Activated B cell treated with CpG ODN at 0.5 μM for 24 hours (primary cell): ENCODE measurements at regions of chr17 and their contacts with region 1.

Region 1: GRCh38 chr17:58219001-58219788 is at the start of gene MKS1:
- DNase-seq: peak; percentile 91
- ATAC-seq: peak; percentile 96
- H3K4me3 Mint-ChIP-seq: peak within 1 kb of the TSS; percentile 91
- H3K27ac Mint-ChIP-seq: peak within 1 kb of the TSS; percentile 96
- H3K4me1 Mint-ChIP-seq: peaks cover 43% of the 10 kb centered on the region
- H3K27me3 Mint-ChIP-seq: peaks cover 2% of the 10 kb centered on the region
- CTCF ChIP-seq: no peak
- total RNA-seq, gene MKS1: 16.0 and 17.3 TPM in 2 replicates

Region 2: DNA sequence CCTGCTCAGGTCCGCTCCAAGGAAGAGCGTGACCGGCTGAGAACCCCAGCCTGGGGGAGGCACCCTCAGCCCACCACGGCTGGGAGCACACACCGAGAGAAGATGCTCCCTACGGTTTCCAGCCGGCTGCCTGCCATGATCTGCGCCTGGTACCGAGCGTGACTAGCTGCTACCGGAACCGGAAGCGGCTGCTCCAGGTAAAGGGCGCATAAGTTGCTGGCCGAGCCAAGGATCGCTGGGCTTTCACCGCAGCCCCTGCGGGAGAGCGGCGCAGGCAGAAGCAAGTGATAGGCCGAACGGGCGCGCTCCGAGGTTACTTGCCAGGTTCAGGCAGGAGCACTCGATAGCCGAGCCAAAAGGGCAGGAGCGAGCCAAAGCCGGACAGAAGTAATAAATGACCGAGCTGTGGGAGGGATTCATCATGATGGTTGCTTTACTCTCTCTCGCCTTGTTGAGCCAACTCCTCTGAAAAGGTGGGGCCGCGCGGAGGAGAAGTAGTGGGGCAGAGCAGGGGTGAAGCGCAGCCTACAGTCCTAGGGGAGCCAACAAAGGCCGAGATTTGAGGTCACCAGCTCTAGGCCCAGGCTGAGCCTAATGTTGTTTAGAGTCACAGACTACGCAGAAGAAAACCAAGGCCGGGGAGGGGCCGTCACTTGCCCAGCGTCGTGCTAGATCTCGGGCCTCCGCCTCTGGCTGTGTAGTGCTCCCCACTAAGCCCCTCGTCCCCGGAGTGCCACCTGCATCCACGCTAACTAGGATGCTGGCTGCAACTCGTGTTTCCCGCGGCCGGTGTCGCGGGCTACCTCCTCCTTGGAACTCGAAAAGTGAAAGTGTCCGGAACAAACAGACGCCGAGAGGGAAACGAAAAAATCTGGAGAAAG is 369.1 kb before region 1 on chr17 and contains the start of gene MRPS23:
- CTCF ChIA-PET with region 1: no interaction called
- POLR2A ChIA-PET with region 1: interaction called, 6 read pairs
- intact Hi-C with region 1: loop called (anchors 1 kb)
- DNase-seq: peak; percentile 87
- ATAC-seq: peak; percentile 95
- H3K4me3 Mint-ChIP-seq: peak within 1 kb of the TSS; percentile 93
- H3K27ac Mint-ChIP-seq: peak within 1 kb of the TSS; percentile 96
- H3K4me1 Mint-ChIP-seq: peaks cover 38% of the 10 kb centered on the region
- H3K27me3 Mint-ChIP-seq: no peaks in the 10 kb centered on the region
- CTCF ChIP-seq: no peak
- total RNA-seq, gene MRPS23: 37.9 and 47.4 TPM in 2 replicates

Region 3: DNA sequence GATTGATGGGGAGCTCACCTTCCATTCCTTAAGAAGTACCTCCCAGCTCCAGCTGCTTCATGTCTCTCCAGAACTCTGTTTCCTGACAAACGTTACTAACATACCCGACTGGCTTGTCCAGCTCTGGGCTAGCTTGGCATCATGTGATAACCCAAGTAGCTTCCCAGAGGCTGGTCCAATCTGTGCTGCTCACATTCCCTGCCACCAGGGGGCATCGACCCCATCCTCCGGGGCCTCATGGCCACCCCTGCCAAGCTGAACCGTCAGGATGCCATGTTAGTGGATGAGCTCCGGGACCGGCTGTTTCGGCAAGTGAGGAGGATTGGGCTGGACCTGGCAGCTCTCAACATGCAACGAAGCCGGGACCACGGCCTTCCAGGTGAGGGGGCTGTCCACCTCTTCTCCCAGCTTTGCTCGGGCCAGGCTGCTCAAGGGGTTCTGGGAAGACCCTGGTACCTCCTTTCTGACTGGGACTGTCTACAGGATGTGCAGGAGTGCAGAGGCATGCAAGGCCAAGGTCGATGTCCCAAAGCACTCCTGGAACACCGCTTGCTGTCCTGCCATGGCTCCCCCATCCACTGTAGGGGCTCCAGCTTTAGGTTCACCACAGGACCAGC is 19.1 kb before region 1 on chr17:
- CTCF ChIA-PET with region 1: interaction called, 16 read pairs
- POLR2A ChIA-PET with region 1: interaction called, 6 read pairs
- intact Hi-C with region 1: no loop called
- DNase-seq: peak; percentile 35
- ATAC-seq: peak; percentile 82
- H3K4me3 Mint-ChIP-seq: no peak overlapping the region
- H3K27ac Mint-ChIP-seq: no peak overlapping the region
- H3K4me1 Mint-ChIP-seq: peaks cover 2% of the 10 kb centered on the region
- H3K27me3 Mint-ChIP-seq: peaks cover 27% of the 10 kb centered on the region
- CTCF ChIP-seq: no peak

Region 4: DNA sequence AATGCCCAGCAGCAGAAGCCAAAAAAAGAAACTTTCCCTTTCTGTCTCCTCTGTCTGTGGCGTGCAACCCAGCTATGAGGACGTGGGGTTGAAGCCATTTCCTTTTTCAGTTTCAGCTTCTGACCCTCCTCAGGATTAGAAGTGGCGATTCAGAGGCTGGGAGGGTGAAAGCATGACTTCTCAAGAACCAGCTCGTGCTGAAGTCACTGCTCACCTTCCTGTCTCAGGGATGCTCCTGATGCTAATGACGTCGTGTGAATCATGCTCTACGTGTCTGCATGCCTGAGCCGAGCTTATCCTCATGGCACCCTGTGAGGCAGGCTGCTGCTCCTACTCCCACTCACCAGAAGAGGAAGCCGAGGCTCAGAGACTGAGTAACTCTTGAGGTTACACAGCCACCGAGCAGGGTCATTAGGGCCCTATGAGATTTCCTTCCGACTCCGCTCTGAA is 13.5 kb after region 1 on chr17:
- CTCF ChIA-PET with region 1: interaction called, 4 read pairs
- POLR2A ChIA-PET with region 1: interaction called, 19 read pairs
- intact Hi-C with region 1: loop called (anchors 1 kb)
- DNase-seq: peak; percentile 29
- ATAC-seq: peak; percentile 76
- H3K4me3 Mint-ChIP-seq: peak overlapping the region; percentile 51
- H3K27ac Mint-ChIP-seq: peak overlapping the region; percentile 90
- H3K4me1 Mint-ChIP-seq: peaks cover 30% of the 10 kb centered on the region
- H3K27me3 Mint-ChIP-seq: peaks cover 2% of the 10 kb centered on the region
- CTCF ChIP-seq: no peak

Region 5: GRCh38 chr17:58249270-58250133 is 30.3 kb after region 1 on chr17:
- CTCF ChIA-PET with region 1: interaction called, 8 read pairs
- POLR2A ChIA-PET with region 1: interaction called, 7 read pairs
- intact Hi-C with region 1: loop called (anchors 1 kb)
- DNase-seq: peak; percentile 80
- ATAC-seq: peak; percentile 96
- H3K4me3 Mint-ChIP-seq: peak overlapping the region; percentile 84
- H3K27ac Mint-ChIP-seq: no peak overlapping the region
- H3K4me1 Mint-ChIP-seq: peaks cover 14% of the 10 kb centered on the region
- H3K27me3 Mint-ChIP-seq: peaks cover 4% of the 10 kb centered on the region
- CTCF ChIP-seq: peak; percentile 71

Region 6: DNA sequence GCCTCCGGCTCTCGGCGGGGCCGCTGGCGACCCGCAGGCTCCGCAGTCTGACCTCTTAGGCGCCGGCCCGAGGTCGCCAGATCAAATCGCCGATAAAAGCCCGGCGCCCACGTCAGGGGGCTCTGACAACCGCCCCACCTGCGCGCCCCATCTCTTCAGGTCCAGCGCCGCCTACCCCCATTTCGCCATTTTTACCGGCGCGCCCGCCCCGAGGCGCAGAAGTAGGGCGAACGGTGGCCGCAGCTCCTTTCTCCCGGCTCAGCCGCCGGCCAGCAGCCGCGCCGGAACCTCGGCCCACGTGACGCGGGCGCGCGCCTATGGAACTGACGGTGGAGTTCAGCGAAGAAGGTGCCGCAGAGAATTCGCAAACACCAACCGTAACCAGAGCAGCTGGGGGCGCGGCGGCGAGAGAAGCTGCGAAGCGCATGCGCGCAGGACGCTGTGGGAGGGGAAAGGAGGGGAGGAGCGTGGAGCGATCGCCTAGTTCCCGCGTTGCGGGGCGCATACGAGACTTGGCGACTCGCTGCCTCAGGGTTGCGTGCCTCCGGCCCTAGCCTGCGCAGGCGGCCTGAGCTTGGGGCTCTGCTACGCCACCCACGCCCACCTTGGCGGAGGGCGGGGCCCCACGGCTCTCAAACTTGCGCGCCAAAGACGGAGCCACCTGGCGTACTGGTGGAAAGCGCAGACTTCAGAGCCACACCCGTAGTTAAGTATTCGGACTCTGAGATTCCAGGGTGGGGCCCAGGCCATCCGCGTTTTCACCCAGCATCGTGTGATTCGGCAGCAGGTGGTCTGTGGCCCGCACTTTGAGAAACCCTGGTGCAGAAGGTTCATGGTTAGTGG is 887.5 kb after region 1 on chr17 and contains the start of gene TRIM37:
- CTCF ChIA-PET with region 1: no interaction called
- POLR2A ChIA-PET with region 1: no interaction called
- intact Hi-C with region 1: loop called (anchors 1 kb)
- DNase-seq: peak; percentile 98
- ATAC-seq: peak; percentile 96
- H3K4me3 Mint-ChIP-seq: peak within 1 kb of the TSS; percentile 94
- H3K27ac Mint-ChIP-seq: peak within 1 kb of the TSS; percentile 82
- H3K4me1 Mint-ChIP-seq: peaks cover 28% of the 10 kb centered on the region
- H3K27me3 Mint-ChIP-seq: no peaks in the 10 kb centered on the region
- CTCF ChIP-seq: no peak
- total RNA-seq, gene TRIM37: 16.4 and 17.3 TPM in 2 replicates

Region 7: DNA sequence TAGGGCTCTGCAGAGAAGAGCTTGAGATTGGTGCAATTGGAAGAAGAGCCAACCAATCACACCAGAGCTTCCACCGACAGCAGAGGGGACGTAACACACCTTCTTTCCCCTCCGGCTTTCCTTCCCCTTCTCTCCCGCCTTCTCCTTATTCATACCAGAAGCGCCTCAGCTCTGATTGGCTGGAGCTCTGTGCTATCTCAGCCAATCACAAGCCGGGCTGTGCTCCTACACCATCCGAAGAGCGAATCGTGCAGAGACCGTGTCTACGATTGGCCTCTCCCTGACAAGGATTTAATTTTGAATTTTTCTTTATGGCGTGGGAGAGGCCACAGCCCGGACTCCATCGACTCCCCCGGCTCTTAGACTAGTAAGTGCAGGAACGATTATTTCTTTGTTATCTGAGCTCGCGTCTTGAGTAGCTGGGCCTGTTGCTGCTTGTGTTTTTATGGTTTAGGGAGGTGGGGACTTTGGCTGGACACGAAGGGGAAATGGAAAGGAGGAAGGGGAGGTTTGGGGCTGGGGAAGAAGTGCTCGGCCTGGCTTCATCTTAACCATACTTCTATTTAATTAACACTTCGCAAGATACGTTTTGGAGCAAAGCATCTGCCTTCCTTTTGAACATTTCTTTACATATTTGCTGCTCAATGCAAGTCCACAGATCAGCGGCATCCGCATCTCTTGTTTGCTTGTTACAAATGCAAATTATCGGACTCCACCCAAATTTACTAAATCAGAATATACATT is 936.4 kb after region 1 on chr17 and contains the start of gene PRR11:
- CTCF ChIA-PET with region 1: no interaction called
- POLR2A ChIA-PET with region 1: no interaction called
- intact Hi-C with region 1: loop called (anchors 2 kb)
- DNase-seq: peak; percentile 65
- ATAC-seq: peak; percentile 88
- H3K4me3 Mint-ChIP-seq: no peak within 1 kb of the TSS
- H3K27ac Mint-ChIP-seq: no peak within 1 kb of the TSS
- H3K4me1 Mint-ChIP-seq: peaks cover 16% of the 10 kb centered on the region
- H3K27me3 Mint-ChIP-seq: no peaks in the 10 kb centered on the region
- CTCF ChIP-seq: no peak
- total RNA-seq, gene PRR11: 2.4 and 4.8 TPM in 2 replicates